ENCODE measurements at regions of chr19 and their contacts with region 1.

Region 1: DNA sequence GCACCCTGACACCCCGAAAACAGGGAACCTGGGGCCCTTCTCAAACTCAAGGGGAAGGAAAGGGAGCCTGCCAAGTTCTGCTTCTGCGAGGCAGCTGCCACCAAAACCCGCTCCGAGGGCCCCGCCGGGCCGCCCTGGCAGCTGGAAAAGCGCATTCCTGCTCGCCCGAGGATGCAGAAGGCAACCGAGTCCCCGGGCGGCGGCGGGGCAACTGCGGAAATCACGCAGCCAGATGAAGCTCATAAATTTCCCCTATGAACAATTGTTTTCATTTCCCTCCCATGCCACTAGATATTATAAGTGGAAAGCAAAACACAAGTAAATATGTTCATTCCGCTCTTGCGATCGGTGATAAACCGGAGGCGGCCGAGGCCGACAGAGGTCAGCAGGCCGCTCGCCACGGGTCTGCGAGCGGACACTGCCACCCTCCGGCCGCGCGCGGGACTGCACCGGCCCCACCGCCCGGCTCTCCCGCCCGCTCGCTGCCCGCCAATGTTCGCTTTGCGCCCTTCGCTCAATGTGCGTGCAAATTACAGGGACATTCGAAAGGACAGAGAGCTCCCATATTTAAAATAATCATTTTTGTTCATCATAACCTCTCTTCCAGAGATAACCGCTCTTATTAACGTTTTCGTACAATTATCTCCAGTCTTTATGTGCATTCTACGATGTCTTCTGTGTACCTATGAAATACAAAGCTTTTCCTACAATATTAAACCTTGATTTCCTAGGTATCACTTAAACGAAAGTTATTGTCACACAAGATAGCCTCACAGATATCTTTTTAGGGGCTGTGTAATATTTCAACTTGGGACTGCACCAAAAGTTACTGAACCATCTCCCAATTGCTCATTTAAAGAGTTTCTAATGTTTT is 120.8 kb upstream of the ZNF507 start:
- DNase-seq: peak; percentile 15
- ATAC-seq: peak; percentile 100
- H3K4me3 ChIP-seq: no peak overlapping the region
- H3K27ac ChIP-seq: no peak overlapping the region
- H3K4me1 ChIP-seq: no peaks in the 10 kb centered on the region
- H3K27me3 ChIP-seq: peaks cover 5% of the 10 kb centered on the region
- CTCF ChIP-seq: peak; percentile 87
- POLR2A ChIP-seq: no peak
- RAD21 ChIP-seq: peak; percentile 90

Region 2: GRCh38 chr19:30669329-30670010 is 1555.1 kb before region 1 on chr19:
- CTCF ChIA-PET with region 1: interaction called, 3 read pairs
- POLR2A ChIA-PET with region 1: no interaction called
- dilution Hi-C with region 1: no loop called
- in situ Hi-C with region 1: no loop called
- intact Hi-C with region 1: loop called (anchors 1 kb)
- DNase-seq: peak; percentile 12
- ATAC-seq: peak; percentile 72
- H3K4me3 ChIP-seq: no peak overlapping the region
- H3K27ac ChIP-seq: no peak overlapping the region
- H3K4me1 ChIP-seq: no peaks in the 10 kb centered on the region
- H3K27me3 ChIP-seq: no peaks in the 10 kb centered on the region; the same call in 1 of the 2 replicates
- CTCF ChIP-seq: peak; percentile 64
- POLR2A ChIP-seq: no peak
- RAD21 ChIP-seq: peak; percentile 57

Region 3: DNA sequence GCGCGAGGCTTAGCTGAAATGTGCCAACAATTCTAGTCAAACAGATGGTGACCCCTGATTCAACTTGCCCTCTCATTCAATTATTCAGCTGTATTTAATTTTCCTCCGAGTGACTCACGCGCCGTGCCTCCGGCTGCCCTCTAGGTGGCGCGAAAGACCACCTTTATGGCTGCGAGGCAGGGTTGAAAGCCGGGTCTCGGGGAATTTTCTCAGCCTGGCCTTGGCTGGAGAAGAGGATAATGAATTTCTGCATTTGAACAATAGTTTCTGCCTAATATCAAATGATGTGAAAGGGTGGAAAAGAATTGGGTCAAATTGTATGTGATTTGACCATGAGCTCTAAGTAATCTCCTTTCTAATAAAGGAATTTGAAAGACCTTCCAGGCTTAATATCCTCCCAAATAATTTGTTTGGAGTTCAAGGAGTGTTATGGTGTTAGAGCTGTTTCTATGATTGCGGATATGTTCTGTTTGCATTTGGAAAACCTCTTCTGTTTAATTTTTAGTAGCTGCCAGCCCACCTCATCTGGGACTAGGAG is 1541.5 kb before region 1 on chr19:
- CTCF ChIA-PET with region 1: interaction called, 6 read pairs
- POLR2A ChIA-PET with region 1: no interaction called
- dilution Hi-C with region 1: no loop called
- in situ Hi-C with region 1: loop called (anchors 5 kb)
- intact Hi-C with region 1: loop called (anchors 1 kb)
- DNase-seq: peak; percentile 82
- ATAC-seq: peak; percentile 97
- H3K4me3 ChIP-seq: no peak overlapping the region
- H3K27ac ChIP-seq: no peak overlapping the region
- H3K4me1 ChIP-seq: no peaks in the 10 kb centered on the region
- H3K27me3 ChIP-seq: peaks cover 11% of the 10 kb centered on the region
- CTCF ChIP-seq: peak; percentile 97
- POLR2A ChIP-seq: no peak; the same call in 1 of the 2 replicates
- RAD21 ChIP-seq: peak; percentile 90

Region 4: GRCh38 chr19:30978639-30979038 is 1246.0 kb before region 1 on chr19:
- CTCF ChIA-PET with region 1: no interaction called
- POLR2A ChIA-PET with region 1: no interaction called
- dilution Hi-C with region 1: no loop called
- in situ Hi-C with region 1: no loop called
- intact Hi-C with region 1: loop called (anchors 10 kb)
- DNase-seq: no peak
- ATAC-seq: no peak
- H3K4me3 ChIP-seq: no peak overlapping the region
- H3K27ac ChIP-seq: no peak overlapping the region
- H3K4me1 ChIP-seq: no peaks in the 10 kb centered on the region
- H3K27me3 ChIP-seq: no peaks in the 10 kb centered on the region
- CTCF ChIP-seq: no peak
- POLR2A ChIP-seq: no peak
- RAD21 ChIP-seq: no peak

Region 5: DNA sequence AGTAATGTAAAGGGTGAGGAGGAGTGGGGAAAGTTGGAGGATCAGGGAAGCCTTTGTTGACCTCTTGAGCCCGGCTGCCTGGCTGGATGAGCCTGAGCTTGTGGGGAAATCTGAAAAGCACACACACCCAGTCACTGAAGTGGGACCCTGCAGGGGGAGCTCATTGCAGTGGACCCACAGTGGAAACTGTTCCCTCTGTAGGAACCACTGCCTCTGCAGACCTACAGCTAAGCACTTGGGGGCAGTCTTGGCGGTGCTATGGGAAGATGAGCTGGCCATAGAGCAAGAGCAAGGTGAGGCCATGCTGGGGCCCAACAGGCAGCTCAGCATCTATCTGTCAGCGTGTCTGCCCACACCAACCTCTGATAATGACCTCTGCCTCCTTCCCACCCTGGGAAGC is 1170.2 kb before region 1 on chr19:
- CTCF ChIA-PET with region 1: interaction called, 3 read pairs
- POLR2A ChIA-PET with region 1: no interaction called
- dilution Hi-C with region 1: no loop called
- in situ Hi-C with region 1: loop called (anchors 25 kb)
- intact Hi-C with region 1: loop called (anchors 1 kb)
- DNase-seq: peak; percentile 83
- ATAC-seq: peak; percentile 98
- H3K4me3 ChIP-seq: no peak overlapping the region
- H3K27ac ChIP-seq: no peak overlapping the region
- H3K4me1 ChIP-seq: no peaks in the 10 kb centered on the region
- H3K27me3 ChIP-seq: peaks cover 5% of the 10 kb centered on the region
- CTCF ChIP-seq: peak; percentile 95
- POLR2A ChIP-seq: no peak
- RAD21 ChIP-seq: peak; percentile 97

Region 6: DNA sequence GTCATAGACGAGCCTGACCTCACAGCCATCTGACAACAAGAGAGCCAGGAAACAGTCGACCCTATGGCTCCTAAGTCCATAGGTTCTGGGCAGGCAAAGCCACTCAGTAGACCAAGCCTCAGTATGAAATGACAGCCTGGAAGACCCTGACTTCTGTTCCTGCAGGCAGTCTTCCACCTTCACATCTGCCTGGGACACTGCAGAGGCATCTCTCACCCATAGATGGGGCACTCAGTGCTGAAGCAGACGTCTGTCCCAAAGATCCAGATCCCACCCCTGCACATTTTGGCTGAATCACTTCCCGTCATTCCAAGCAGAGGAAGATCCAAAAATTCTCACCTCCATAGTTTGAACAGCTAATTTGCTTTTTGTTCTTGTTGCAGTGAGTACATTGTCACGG is 18.5 kb before region 1 on chr19:
- CTCF ChIA-PET with region 1: no interaction called
- POLR2A ChIA-PET with region 1: no interaction called
- dilution Hi-C with region 1: no loop called
- in situ Hi-C with region 1: no loop called
- intact Hi-C with region 1: no loop called
- DNase-seq: no peak
- ATAC-seq: no peak
- H3K4me3 ChIP-seq: no peak overlapping the region
- H3K27ac ChIP-seq: no peak overlapping the region
- H3K4me1 ChIP-seq: no peaks in the 10 kb centered on the region
- H3K27me3 ChIP-seq: no peaks in the 10 kb centered on the region
- CTCF ChIP-seq: no peak
- POLR2A ChIP-seq: no peak
- RAD21 ChIP-seq: no peak

Region 7: DNA sequence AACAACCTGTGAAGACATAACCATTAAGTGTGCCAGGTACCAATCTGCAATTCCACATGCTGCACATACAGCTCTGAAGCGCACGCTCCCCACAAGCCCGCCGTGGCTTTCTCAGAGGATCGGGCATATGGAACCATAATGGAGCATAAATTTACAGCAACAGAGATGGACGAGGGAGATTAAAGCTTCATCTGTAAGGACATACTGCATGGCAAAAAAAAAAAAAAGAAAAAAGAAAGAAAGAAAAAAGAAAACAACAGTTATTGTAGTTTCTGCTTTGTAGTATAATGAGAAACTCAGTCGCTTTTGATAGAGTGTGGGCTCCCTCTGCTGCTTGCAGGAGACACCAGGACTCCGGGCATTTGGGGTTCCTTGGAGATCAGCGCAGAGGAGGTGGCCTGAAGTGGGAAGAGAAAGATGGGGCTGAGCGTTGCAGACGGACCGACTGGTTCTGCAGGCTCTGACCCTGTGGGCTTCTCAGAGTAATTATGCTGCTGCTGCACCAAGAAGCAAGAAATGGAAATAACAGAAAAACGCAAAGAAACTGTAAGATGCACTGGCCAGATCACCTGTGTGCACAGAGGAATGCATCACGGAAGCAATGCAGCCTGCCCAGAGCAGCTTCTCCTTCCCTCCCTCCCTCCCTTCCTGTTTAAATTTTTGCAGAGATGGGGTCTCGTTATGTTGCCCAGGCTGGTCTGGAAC is 345.6 kb after region 1 on chr19:
- CTCF ChIA-PET with region 1: no interaction called
- POLR2A ChIA-PET with region 1: no interaction called
- dilution Hi-C with region 1: no loop called
- in situ Hi-C with region 1: no loop called
- intact Hi-C with region 1: loop called (anchors 1 kb)
- DNase-seq: peak; percentile 57
- ATAC-seq: peak; percentile 95
- H3K4me3 ChIP-seq: no peak overlapping the region
- H3K27ac ChIP-seq: no peak overlapping the region
- H3K4me1 ChIP-seq: no peaks in the 10 kb centered on the region
- H3K27me3 ChIP-seq: 0 out of 2 replicates have a peak, but pooled peaks cover 2% of the 10 kb centered on the region
- CTCF ChIP-seq: peak; percentile 77
- POLR2A ChIP-seq: no peak
- RAD21 ChIP-seq: peak; percentile 84

Measured in IMR-90 (cell line).